ENCODE measurements at regions of chr6 and their contacts with region 1.

Region 1: DNA sequence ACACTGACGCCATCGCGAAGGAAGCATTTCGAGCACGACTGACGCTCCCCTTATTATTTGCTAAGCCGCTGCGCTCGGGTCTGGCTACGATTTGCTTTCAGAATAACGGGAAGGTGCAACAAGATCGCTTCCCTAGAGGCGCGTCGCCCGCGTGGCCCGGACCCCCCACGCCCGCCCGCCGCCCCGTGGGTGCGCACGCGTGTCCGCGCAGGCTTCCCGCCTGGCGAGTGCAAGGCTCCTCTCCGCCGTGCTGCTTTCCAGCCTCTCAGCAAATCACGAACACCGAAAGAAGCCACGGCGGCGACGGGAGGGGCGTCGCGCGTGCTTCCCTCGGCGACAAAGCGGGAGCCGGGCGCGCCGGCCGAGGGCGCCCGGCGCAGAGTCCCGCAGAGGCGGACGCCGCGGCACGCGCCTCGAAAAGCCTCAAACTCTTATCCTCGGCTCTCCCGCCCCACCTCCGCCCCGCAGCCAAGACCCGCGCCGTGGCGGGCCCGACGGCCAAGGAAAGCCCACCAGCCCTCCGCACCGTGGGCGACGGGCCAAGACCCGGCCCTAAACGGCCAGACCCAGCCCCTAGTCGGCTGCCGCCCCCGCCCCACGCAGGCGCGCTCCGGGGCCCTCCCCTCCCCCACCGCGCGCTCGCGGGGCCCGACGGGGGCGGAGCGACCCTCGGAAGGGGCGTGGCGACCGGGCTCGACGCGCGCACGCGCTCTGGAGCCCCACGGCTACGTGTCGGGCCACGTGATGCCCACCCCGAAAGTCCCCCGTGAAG is 987 bp upstream of the QKI start:
- DNase-seq: peak; percentile 24
- H3K4me3 ChIP-seq: peak overlapping the region; percentile 88 to 100 (median 97)
- H3K27ac ChIP-seq: peak overlapping the region; percentile 91 to 100 (median 99)
- H3K4me1 ChIP-seq: peaks cover 0 to 26% (median 2%) of the 10 kb centered on the region in 3 donors
- H3K27me3 ChIP-seq: no peaks in the 10 kb centered on the region
- CTCF ChIP-seq: peak in 1 of 6 experiments; percentile 13
- POLR2A ChIP-seq: peak in 2 of 4 donors; percentile 57 to 89

Region 2: DNA sequence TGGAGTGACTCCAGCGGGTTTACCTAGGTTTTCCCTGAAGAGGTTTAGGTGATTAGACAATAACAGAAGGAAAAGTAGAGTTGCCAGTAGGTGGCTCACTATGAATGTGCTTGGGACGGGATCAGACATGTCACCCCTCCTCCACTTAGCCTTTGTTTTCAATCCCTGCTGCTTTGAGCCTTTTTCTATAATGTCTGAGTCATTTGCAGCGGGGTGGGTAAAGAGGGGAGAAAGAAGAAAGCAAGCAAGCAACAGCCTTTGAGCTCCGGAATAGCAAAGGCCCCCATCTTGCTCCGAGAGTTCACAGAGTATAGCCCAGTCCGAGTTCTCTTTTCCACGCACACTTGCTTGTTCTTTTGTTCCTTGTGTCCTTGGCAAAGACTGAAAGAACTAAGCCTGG is 556.6 kb before region 1 on chr6:
- intact Hi-C with region 1: loop called (anchors 10 kb)
- DNase-seq: no peak
- H3K4me3 ChIP-seq: peak overlapping the region in 3 of 4 donors; percentile 25 to 47 (median 29)
- H3K27ac ChIP-seq: peak overlapping the region; percentile 6 to 69 (median 29)
- H3K4me1 ChIP-seq: peaks cover 0 to 22% (median 6%) of the 10 kb centered on the region in 3 donors
- H3K27me3 ChIP-seq: no peaks in the 10 kb centered on the region
- CTCF ChIP-seq: peak; percentile 15 to 58 (median 40)
- POLR2A ChIP-seq: no peak

Region 3: DNA sequence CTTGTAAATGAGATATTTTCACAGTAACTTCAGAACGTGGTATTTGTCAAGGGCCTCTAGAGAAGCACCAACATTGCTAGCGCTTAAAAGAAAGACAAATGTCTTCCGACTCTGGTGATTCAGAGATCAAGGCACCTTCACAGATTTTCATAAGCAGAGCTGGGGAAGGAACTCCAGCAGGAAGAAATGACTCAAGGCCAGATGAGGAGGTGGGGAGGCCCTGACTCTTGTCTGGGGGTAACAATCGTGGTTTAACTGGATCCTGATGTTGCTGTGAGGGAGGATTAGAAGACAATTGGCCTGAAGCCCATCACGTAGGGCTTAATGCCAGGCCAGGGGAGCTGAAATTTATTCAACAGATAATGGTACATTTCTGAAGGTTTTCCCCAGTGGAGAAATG is 121.9 kb before region 1 on chr6:
- intact Hi-C with region 1: no loop called
- DNase-seq: no peak
- H3K4me3 ChIP-seq: no peak overlapping the region
- H3K27ac ChIP-seq: no peak overlapping the region
- H3K4me1 ChIP-seq: no peaks in the 10 kb centered on the region
- H3K27me3 ChIP-seq: no peaks in the 10 kb centered on the region
- CTCF ChIP-seq: no peak
- POLR2A ChIP-seq: no peak

Region 4: GRCh38 chr6:163837691-163838431 is 424.3 kb after region 1 on chr6:
- intact Hi-C with region 1: no loop called
- DNase-seq: no peak
- H3K4me3 ChIP-seq: peak overlapping the region in 2 of 4 donors; percentile 10 to 33
- H3K27ac ChIP-seq: no peak overlapping the region
- H3K4me1 ChIP-seq: peaks cover 0 to 13% (median 0%) of the 10 kb centered on the region in 3 donors
- H3K27me3 ChIP-seq: no peaks in the 10 kb centered on the region
- CTCF ChIP-seq: no peak
- POLR2A ChIP-seq: no peak